ENCODE measurements at regions of chr21 and their contacts with region 1.

Region 1: GRCh38 chr21:14877570-14878228 is 187.1 kb downstream of the NRIP1 start:
- DNase-seq: peak; percentile 36
- CTCF ChIP-seq: no peak

Region 2: DNA sequence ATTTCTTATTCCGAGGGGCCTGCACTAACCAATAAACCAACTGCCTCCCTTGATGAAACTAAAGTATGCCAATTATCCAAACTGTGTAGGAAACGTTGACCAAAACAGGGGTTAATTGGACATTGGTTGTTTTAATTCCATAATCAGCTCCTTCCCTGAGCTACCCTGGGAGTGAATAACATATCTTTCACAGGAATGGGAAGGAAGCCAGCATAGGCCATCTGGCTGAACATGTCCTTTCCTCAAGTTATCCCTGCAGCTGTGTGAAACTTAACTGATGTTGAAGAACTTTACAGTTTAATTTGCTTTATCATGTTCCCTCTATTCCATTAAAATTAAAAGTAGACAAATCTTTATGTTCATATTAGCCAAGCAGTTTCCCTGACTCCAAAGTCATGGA is 111.7 kb after region 1 on chr21:
- in situ Hi-C with region 1: no loop called
- DNase-seq: no peak
- CTCF ChIP-seq: no peak

Region 3: GRCh38 chr21:15051644-15052458 is 174.2 kb after region 1 on chr21:
- in situ Hi-C with region 1: loop called (anchors 10 kb)
- DNase-seq: peak; percentile 47
- CTCF ChIP-seq: no peak

Region 4: GRCh38 chr21:15108801-15109200 is 231.1 kb after region 1 on chr21:
- in situ Hi-C with region 1: no loop called
- DNase-seq: no peak
- CTCF ChIP-seq: no peak

Region 5: GRCh38 chr21:15483138-15483780 is 605.6 kb after region 1 on chr21:
- in situ Hi-C with region 1: loop called (anchors 10 kb)
- DNase-seq: peak; percentile 55
- CTCF ChIP-seq: peak; percentile 81

Measured in GM13976 (cell line).